Lower leg skin (tissue), 4 donors: ENCODE measurements at regions of chr12 and their contacts with region 1.

Region 1: DNA sequence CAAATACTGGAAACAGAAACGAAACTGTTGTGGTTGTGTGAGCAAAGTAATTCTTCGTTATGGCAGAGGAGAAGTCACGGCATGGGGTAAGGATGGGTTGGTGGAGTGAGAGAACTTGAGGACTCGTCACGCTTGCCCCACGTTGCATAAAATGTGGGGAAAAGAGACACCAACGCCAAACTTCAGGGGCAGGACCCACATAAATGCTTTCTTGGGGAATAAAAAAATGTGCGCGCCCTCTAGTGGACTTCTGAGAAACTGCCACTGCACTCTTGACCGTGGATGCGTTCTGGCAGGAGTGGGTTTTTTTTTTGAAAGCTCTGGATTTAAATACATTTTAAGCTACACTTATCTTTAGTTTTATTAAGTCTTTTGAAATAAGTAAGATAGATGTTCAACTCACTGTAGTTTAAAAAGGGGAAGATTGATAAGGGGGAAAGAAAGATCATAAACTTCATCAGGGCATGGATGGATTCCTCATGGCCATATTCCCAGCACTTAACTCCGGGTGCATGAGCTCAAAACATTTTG is 4.1 kb upstream of the IGF1 start:
- DNase-seq: peak; percentile 57 to 91
- H3K4me3 ChIP-seq: no peak overlapping the region
- CTCF ChIP-seq: peak in 1 of 3 donors; percentile 37
- POLR2A ChIP-seq: no peak

Region 2: GRCh38 chr12:101939856-101940265 is 544.6 kb before region 1 on chr12:
- intact Hi-C with region 1: loop called (anchors 10 kb)
- DNase-seq: peak in 1 of 2 donors; percentile 65
- H3K4me3 ChIP-seq: no peak overlapping the region
- CTCF ChIP-seq: peak in 1 of 3 donors; percentile 15
- POLR2A ChIP-seq: no peak

Region 3: GRCh38 chr12:102394200-102394599 is 90.3 kb before region 1 on chr12:
- intact Hi-C with region 1: no loop called
- DNase-seq: no peak
- H3K4me3 ChIP-seq: no peak overlapping the region
- CTCF ChIP-seq: no peak
- POLR2A ChIP-seq: no peak

Region 4: DNA sequence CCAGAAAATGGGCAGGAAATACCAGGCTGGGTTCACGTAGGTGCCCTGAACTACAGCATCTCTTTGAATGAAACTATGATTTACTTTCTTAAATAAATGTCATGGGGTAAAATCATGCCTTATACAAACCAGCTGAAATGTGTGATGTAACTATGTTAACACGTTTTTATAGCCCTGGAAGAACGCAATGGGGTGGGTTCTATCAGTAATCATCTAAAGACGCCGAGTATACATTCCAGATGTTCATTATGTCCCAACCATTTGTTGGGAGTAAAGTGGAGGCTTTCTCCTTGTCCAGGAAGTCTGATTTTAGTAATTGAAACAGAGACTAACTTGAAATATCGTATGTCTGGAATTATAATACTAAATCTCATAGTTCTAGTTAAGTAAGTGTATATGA is 12.1 kb after region 1 on chr12:
- intact Hi-C with region 1: loop called (anchors 1 kb)
- DNase-seq: no peak
- H3K4me3 ChIP-seq: no peak overlapping the region
- CTCF ChIP-seq: no peak
- POLR2A ChIP-seq: no peak

Region 5: DNA sequence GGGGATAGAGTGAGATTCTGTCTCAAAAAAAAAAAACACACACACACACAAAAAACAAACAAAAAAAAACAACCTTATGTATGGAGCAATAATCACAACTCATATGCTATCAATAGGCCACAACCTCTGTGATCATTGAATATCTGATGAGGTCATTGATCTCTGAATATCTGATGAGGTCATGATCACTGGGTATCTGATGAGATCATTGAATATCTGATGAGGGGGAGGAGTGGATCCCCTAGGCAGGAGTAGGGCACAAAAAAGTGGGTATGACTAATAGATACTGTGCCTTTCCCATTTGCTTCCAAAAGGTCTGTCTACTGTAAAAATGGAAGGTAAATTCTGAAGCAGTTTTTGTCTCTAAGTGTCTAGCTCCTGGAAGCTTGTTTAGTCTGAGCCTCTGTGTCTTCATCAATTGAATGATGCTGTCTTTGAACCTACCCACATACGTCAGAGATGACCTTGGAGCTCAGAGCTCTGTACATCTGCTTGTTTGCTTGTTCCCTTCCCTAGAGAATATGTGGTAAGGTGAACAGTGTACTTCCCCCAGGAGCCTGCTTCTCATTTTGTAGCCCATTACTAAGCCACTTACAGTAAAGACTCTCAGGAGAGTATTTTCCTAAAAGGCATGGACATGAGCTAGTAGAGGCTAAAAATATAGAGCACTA is 419.0 kb after region 1 on chr12:
- intact Hi-C with region 1: no loop called
- DNase-seq: no peak
- H3K4me3 ChIP-seq: no peak overlapping the region
- CTCF ChIP-seq: no peak
- POLR2A ChIP-seq: no peak